Head of caudate nucleus (tissue), 42 donors: ENCODE measurements at regions of chr7 and their contacts with region 1.

Region 1: DNA sequence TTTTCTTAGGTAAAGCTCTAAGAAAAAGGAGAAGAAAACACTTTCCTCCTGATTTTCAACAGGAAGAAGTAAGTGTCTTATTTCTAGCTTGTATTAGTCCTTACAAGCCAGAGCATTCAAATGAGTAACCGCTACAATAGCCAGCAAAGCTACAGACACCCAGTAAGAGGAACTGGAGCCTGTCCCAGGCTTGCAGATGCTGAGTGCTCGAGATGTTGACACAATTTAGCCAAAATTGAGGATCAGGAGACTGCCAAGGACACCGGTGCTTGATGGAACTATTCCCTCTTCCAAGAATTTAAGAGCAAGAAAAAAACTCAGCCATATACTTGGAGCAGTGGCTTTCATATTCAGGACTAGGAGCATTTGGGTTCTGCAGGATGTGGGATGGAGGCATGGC is 149.3 kb upstream of the DPP6 start:
- DNase-seq: peak in 2 of 42 donors; percentile 7 to 11

Region 2: GRCh38 chr7:153858355-153858754 is 44.5 kb before region 1 on chr7:
- intact Hi-C with region 1: loop called (anchors 5 kb)
- DNase-seq: no peak

Region 3: GRCh38 chr7:153943861-153944260 is 41.0 kb after region 1 on chr7:
- intact Hi-C with region 1: no loop called
- DNase-seq: peak in 2 of 42 donors; percentile 16 to 38